ENCODE measurements at regions of chr5 and their contacts with region 1.

Region 1: GRCh38 chr5:171207256-171207847 is 101.7 kb upstream of the TLX3 start:
- DNase-seq: no peak
- H3K4me3 ChIP-seq: no peak overlapping the region
- CTCF ChIP-seq: peak; percentile 40

Region 2: DNA sequence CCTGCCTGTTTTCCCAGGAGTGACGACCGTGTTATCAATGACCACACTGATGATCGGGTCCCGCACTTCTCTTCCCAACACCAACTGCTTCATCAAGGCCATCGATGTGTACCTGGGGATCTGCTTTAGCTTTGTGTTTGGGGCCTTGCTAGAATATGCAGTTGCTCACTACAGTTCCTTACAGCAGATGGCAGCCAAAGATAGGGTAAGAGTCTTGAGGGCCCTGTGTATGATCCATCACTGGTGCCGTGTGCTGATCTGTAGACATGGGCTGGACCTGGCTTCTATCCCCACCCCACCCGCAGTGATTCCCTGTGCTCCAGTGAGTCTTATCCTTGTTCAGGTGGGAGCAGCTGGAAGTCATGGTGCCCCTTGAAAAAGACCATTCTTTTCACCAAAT is 397.8 kb before region 1 on chr5:
- CTCF ChIA-PET with region 1: interaction called, 12 read pairs
- POLR2A ChIA-PET with region 1: no interaction called
- DNase-seq: no peak
- H3K4me3 ChIP-seq: no peak overlapping the region
- CTCF ChIP-seq: peak; percentile 54

Region 3: GRCh38 chr5:170974461-170974860 is 232.9 kb before region 1 on chr5:
- CTCF ChIA-PET with region 1: no interaction called
- POLR2A ChIA-PET with region 1: no interaction called
- DNase-seq: no peak
- H3K4me3 ChIP-seq: no peak overlapping the region
- CTCF ChIP-seq: no peak

Region 4: DNA sequence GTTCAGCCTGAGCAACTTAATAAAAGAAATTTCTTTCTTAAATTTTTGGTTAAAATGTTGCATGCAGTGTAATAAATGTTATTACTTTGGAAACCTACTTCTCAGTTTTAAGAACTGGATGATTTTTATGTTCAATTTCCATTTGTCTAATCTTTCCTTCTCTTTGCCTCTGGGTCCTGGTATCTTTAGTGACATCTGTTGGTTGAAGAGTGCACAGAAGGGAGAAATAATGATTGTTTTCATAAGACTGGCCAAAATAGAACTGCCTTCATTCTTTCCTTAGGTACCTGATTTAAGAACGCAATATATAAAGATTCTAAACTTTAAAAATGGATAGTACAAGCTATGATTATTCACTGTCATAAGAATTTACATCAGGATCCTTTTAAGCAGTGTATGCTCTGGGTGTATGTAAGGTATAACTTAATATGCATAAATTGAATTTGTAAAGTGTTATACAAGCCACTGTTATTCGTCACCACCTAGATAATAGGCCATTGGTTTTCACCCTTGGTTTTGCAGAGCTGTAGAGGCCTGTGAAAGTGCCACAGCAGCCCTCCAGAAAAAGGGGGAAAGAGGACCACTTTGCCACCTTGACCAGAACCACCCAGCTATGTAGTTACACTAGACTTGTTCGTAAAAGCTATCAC is 18.9 kb after region 1 on chr5:
- CTCF ChIA-PET with region 1: interaction called, 15 read pairs
- POLR2A ChIA-PET with region 1: no interaction called
- DNase-seq: no peak
- H3K4me3 ChIP-seq: no peak overlapping the region
- CTCF ChIP-seq: peak; percentile 5

Region 5: GRCh38 chr5:171318026-171318425 is 110.7 kb after region 1 on chr5:
- CTCF ChIA-PET with region 1: interaction called, 12 read pairs
- POLR2A ChIA-PET with region 1: no interaction called
- DNase-seq: no peak
- H3K4me3 ChIP-seq: no peak overlapping the region
- CTCF ChIP-seq: no peak

Region 6: DNA sequence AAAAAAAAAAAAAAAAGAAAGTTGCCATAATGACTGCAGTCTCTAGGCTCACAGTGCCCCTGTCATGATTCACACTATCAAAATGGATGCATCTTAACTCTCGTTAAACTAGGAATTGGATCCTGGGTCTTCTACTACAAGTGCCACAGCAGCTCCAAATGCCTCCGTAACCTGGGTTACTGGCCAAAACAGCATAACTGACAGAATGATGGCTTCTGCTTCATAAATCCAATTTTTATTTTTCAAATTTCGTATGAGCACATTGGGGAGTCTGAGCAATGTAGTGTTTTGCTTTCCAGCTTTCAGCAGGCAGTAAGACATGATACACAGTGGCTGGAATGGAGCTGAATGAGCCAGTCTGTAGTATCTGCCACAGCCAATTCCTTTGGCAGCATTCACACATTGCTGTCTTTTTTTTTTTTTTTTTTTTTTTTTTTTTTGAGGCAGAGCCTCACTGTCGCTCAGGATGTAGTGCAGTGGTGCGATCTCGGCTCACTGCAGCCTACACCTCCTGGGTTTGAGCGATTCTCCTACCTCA is 144.3 kb after region 1 on chr5:
- CTCF ChIA-PET with region 1: interaction called, 460 read pairs
- POLR2A ChIA-PET with region 1: no interaction called
- DNase-seq: no peak
- H3K4me3 ChIP-seq: no peak overlapping the region
- CTCF ChIP-seq: no peak

Measured in AG04449 (cell line).